ENCODE measurements at regions of chr21 and their contacts with region 1.

Region 1: GRCh38 chr21:32257962-32258785 is 20.7 kb downstream of the MIS18A start:
- DNase-seq: peak; percentile 43 to 67
- ATAC-seq: peak; percentile 75 to 85 (median 81)
- H3K4me3 ChIP-seq: no peak overlapping the region
- H3K27ac ChIP-seq: no peak overlapping the region
- H3K4me1 ChIP-seq: peaks cover 7 to 33% (median 17%) of the 10 kb centered on the region in 9 donors
- H3K27me3 ChIP-seq: no peaks in the 10 kb centered on the region
- CTCF ChIP-seq: peak; percentile 42 to 84 (median 72)

Region 2: DNA sequence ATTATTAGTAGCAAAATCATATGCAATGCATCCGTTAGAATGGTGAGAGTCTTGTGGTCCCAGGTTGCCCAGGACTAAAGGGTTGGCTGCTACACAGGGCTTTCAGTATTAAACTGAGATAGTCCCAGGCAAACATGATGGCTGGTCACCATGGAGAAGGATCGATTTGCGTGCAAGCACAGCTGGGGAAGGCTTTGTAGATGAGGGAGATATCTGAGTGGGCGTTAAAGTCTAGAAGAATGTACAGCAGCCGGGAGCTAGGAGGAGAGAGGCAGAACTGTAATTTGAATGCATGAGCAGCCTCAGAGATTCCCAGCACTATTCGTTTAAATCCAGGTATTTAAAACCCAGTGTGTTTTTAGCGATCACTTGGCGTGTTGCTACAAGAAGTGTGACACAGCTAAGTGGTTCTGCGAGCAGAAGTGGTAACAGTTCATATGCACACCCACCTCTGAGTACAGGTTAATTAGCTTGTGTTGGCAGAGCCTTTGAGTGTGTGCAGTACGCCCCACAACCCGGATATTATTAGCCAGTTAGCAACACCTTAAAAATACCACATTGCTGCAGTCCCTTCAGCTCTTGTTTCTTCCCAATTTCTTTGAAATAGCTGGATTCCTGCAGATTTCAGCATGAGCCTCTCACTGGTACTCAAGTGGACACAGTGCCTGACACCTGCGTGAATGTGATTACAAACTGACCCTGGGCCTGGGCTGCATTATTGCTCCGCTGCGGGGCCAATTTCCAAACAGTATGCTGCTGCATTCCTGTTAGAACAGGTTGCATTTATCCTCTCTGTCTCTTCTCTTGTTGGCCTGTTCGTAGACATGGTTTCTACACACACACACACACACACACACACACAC is 459.1 kb before region 1 on chr21:
- intact Hi-C with region 1: loop called in 2 of 10 experiments (anchors 5 kb)
- DNase-seq: no peak
- ATAC-seq: no peak
- H3K4me3 ChIP-seq: no peak overlapping the region
- H3K27ac ChIP-seq: no peak overlapping the region
- H3K4me1 ChIP-seq: peaks cover 0 to 5% (median 0%) of the 10 kb centered on the region in 9 donors
- H3K27me3 ChIP-seq: peaks cover 0 to 35% (median 13%) of the 10 kb centered on the region in 7 donors
- CTCF ChIP-seq: no peak

Region 3: GRCh38 chr21:31873696-31874599 is 384.2 kb before region 1 on chr21:
- intact Hi-C with region 1: loop called in 5 of 10 experiments (anchors 1 to 5 kb)
- DNase-seq: peak in 1 of 2 donors; percentile 60
- ATAC-seq: peak in 7 of 8 donors; percentile 50 to 61 (median 55)
- H3K4me3 ChIP-seq: peak overlapping the region; percentile 18 to 66 (median 58)
- H3K27ac ChIP-seq: no peak overlapping the region
- H3K4me1 ChIP-seq: peaks cover under 1 to 25% (median 13%) of the 10 kb centered on the region in 9 donors
- H3K27me3 ChIP-seq: peaks cover 0 to 73% (median 46%) of the 10 kb centered on the region in 7 donors
- CTCF ChIP-seq: peak in 8 of 9 donors; percentile 38 to 68 (median 61)

Region 4: GRCh38 chr21:32021319-32021994 is 236.7 kb before region 1 on chr21:
- intact Hi-C with region 1: loop called in 2 of 10 experiments (anchors 10 kb)
- DNase-seq: peak; percentile 75 to 78
- ATAC-seq: peak; percentile 79 to 98 (median 96)
- H3K4me3 ChIP-seq: no peak overlapping the region
- H3K27ac ChIP-seq: peak overlapping the region in 6 of 10 donors; percentile 6 to 41 (median 35)
- H3K4me1 ChIP-seq: peaks cover 0 to 15% (median 7%) of the 10 kb centered on the region in 9 donors
- H3K27me3 ChIP-seq: no peaks in the 10 kb centered on the region
- CTCF ChIP-seq: no peak

Region 5: DNA sequence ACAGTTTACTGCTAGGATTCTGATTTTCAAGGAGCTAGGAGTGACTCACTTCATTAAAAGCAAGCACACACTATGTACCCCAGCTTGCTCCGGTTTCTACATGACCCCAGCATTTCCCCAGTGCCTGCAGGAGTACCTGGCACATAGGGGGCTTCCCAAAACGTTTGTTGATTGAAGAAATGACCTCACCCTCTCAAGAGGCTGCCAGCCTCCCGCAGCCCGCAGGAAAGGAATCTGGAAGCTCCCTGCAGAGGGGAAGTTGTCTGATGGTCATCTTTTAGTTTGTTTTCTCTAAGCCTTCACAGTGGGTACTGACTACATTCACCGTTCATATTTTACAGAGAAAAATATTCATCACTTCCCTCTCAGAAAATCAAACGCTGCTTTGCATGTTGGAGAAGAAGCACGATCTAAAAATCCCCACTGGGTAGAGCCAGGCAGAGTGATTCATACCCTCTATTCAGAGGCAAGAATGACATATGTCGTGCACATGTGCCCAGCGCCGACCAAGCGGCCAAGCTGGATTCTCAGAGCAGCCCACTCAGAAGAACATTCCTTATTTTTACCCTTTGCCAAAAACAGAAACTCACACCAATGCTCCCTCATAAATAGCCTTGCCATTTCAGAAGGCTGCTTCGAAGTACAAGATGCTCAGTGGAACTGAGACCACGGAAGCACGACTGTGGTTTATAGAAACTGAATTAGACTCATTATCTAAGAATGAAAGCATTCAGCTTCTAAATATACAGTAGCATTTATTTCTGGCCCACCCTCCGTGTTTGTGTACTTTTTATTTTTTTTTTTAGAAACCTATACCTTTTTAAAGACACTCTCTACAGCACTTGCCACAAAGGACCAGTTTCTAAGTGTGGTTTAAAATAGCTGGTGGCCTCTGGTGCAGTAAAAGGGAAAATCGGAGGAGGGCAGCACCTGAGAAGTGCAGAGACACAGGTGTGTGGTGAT is 122.5 kb before region 1 on chr21:
- intact Hi-C with region 1: loop called in 1 of 10 experiments (anchors 10 kb)
- DNase-seq: no peak
- ATAC-seq: peak in 6 of 8 donors; percentile 36 to 52 (median 46)
- H3K4me3 ChIP-seq: peak overlapping the region in 1 of 10 donors; percentile 20
- H3K27ac ChIP-seq: no peak overlapping the region
- H3K4me1 ChIP-seq: peaks cover 2 to 34% (median 17%) of the 10 kb centered on the region in 9 donors
- H3K27me3 ChIP-seq: no peaks in the 10 kb centered on the region
- CTCF ChIP-seq: peak in 1 of 9 donors; percentile 15

Region 6: DNA sequence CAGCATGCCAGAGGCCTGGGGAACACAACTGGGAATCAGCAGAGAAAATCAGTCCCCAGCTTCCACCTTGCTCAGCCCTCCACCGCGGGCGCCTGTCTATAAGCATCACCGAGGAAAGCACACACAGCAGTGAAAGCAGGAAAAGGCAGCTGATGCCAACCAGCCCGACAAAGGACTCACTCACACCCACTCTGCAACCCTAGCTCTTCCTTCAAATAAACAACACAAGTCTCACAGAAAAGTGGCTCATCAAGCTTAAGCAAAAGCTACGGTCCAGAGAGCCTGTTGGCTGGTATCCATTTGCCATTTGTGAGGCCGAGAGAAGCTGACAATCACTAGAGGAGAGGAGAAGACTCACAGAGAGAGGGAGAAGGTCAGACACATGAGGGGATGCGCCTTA is 67.5 kb after region 1 on chr21:
- intact Hi-C with region 1: no loop called
- DNase-seq: no peak
- ATAC-seq: no peak
- H3K4me3 ChIP-seq: no peak overlapping the region
- H3K27ac ChIP-seq: peak overlapping the region in 3 of 10 donors; percentile 2 to 35 (median 12)
- H3K4me1 ChIP-seq: peaks cover 5 to 53% (median 24%) of the 10 kb centered on the region in 9 donors
- H3K27me3 ChIP-seq: no peaks in the 10 kb centered on the region
- CTCF ChIP-seq: no peak

Measured in heart right ventricle (tissue), 16 donors.